HCT116 (cell line): ENCODE measurements at regions of chr9 and their contacts with region 1.

Region 1: GRCh38 chr9:90240541-90240940 is 402.1 kb downstream of the DIRAS2 start:
- DNase-seq: no peak
- ATAC-seq: no peak
- H3K4me3 ChIP-seq: no peak overlapping the region
- H3K27ac ChIP-seq: no peak overlapping the region
- H3K4me1 ChIP-seq: no peaks in the 10 kb centered on the region
- H3K27me3 ChIP-seq: peaks cover 3% of the 10 kb centered on the region
- CTCF ChIP-seq: no peak
- POLR2A ChIP-seq: no peak
- RAD21 ChIP-seq: no peak

Region 2: DNA sequence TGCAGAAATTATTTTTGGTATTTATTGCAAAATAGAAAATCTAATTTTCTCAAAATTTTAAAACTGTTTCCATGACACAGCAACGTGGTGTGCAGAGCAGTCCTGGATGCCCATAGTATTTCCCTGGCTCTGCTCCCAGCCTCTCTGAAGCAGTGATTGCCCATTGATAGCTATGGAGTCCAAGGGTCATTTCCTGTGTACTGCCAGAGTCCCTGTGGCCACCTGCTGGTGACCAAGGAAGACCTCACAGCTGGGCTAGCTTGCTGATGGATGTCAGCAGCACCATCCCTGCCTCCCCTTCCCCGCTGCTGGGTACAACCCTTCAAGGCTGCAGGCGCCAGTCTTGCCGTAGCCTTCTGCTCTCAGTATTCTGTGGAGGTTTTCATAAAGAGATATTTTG is 217.9 kb after region 1 on chr9:
- CTCF ChIA-PET with region 1: no interaction called
- POLR2A ChIA-PET with region 1: no interaction called
- RAD21 ChIA-PET with region 1: no interaction called
- intact Hi-C with region 1: loop called (anchors 10 kb)
- DNase-seq: peak; percentile 16
- ATAC-seq: peak; percentile 70
- H3K4me3 ChIP-seq: no peak overlapping the region
- H3K27ac ChIP-seq: no peak overlapping the region
- H3K4me1 ChIP-seq: peaks cover 0 to 3% of the 10 kb centered on the region in 2 experiments; a peak in 1 of 4 replicates
- H3K27me3 ChIP-seq: 0 out of 2 replicates have a peak, but pooled peaks cover 8% of the 10 kb centered on the region
- CTCF ChIP-seq: peak; percentile 28 to 50 (median 48); a peak in 4 of 6 replicates
- POLR2A ChIP-seq: no peak
- RAD21 ChIP-seq: peak; percentile 30; the same call in 1 of the 2 replicates

Region 3: GRCh38 chr9:90489066-90489465 is 248.5 kb after region 1 on chr9:
- CTCF ChIA-PET with region 1: no interaction called
- POLR2A ChIA-PET with region 1: no interaction called
- RAD21 ChIA-PET with region 1: no interaction called
- intact Hi-C with region 1: no loop called
- DNase-seq: no peak
- ATAC-seq: no peak
- H3K4me3 ChIP-seq: no peak overlapping the region
- H3K27ac ChIP-seq: no peak overlapping the region
- H3K4me1 ChIP-seq: no peaks in the 10 kb centered on the region
- H3K27me3 ChIP-seq: peaks cover 7% of the 10 kb centered on the region; the same call in 1 of the 2 replicates
- CTCF ChIP-seq: no peak
- POLR2A ChIP-seq: no peak
- RAD21 ChIP-seq: no peak